ENCODE measurements at regions of chr11 and their contacts with region 1.

Region 1: DNA sequence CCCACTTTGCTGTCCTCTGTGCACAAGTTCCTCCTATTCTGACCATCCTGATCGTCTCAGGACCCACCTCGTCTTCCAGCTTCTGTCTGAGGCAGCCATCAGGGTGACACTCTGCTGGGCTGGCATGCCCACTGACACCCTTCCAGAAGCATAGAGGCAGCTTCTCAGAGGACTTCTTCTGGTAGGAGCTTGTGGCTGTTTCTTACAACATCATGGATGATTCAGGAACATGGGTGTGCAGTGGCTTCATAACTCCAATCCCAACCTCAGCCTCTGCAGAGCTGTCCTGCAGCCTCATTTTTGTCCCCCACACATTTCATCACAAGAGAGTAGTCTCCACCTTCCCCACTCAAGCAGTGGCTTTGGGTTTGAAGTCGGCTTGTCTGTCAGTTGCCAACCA is 20.9 kb upstream of the CTR9 start:
- DNase-seq: no peak
- ATAC-seq: no peak
- H3K4me3 ChIP-seq: no peak overlapping the region
- H3K27ac ChIP-seq: no peak overlapping the region
- H3K4me1 ChIP-seq: peaks cover 10% of the 10 kb centered on the region in 2 donors
- H3K27me3 ChIP-seq: no peaks in the 10 kb centered on the region
- CTCF ChIP-seq: no peak
- POLR2A ChIP-seq: no peak

Region 2: GRCh38 chr11:10674911-10675440 is 55.2 kb before region 1 on chr11:
- in situ Hi-C with region 1: no loop called
- intact Hi-C with region 1: loop called (anchors 5 kb)
- DNase-seq: peak; percentile 69 to 83
- ATAC-seq: peak; percentile 91 to 93
- H3K4me3 ChIP-seq: peak overlapping the region; percentile 18 to 47 (median 39)
- H3K27ac ChIP-seq: peak overlapping the region; percentile 84 to 92 (median 88)
- H3K4me1 ChIP-seq: peaks cover 28 to 33% of the 10 kb centered on the region in 2 donors
- H3K27me3 ChIP-seq: no peaks in the 10 kb centered on the region
- CTCF ChIP-seq: no peak
- POLR2A ChIP-seq: no peak

Region 3: GRCh38 chr11:10716127-10716526 is 14.0 kb before region 1 on chr11:
- in situ Hi-C with region 1: no loop called
- intact Hi-C with region 1: no loop called
- DNase-seq: no peak
- ATAC-seq: no peak
- H3K4me3 ChIP-seq: no peak overlapping the region
- H3K27ac ChIP-seq: no peak overlapping the region
- H3K4me1 ChIP-seq: no peaks in the 10 kb centered on the region
- H3K27me3 ChIP-seq: no peaks in the 10 kb centered on the region
- CTCF ChIP-seq: no peak
- POLR2A ChIP-seq: no peak

Measured in gastrocnemius medialis (tissue), 4 donors.